Ascending aorta (tissue), 2 donors: ENCODE measurements at regions of chr6 and their contacts with region 1.

Region 1: GRCh38 chr6:170165072-170165463 is 125.8 kb downstream of the DLL1 start:
- DNase-seq: peak in 1 of 2 donors; percentile 76
- H3K4me3 ChIP-seq: peak overlapping the region in 1 of 2 donors; percentile 17
- H3K27ac ChIP-seq: no peak overlapping the region
- H3K4me1 ChIP-seq: no peaks in the 10 kb centered on the region
- H3K27me3 ChIP-seq: no peaks in the 10 kb centered on the region
- CTCF ChIP-seq: peak in 2 of 3 experiments; percentile 20 to 33

Region 2: DNA sequence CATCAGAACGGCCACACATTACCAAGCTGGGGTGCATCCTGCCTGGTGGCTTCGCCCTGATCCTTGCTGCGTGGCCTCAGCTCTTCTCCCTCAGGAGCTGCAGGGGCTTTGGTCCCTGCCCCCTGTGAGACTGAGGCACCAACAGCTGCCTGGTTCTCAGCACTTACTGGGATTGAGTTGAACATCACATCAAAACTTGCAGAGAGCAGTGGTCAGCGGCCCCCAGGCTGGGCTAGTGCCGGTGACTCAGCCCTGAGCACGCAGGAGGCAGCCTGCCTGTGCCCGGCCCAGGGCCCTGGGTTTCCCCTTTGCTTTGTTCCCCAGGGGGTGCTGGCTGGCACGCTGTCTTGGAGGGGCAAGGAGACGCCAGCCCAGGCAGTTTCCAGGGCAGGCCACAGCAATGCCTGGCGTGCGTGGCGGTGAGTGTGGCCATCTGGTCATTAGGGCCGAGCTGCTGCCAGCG is 62.5 kb after region 1 on chr6:
- intact Hi-C with region 1: no loop called
- DNase-seq: no peak
- H3K4me3 ChIP-seq: no peak overlapping the region
- H3K27ac ChIP-seq: no peak overlapping the region
- H3K4me1 ChIP-seq: no peaks in the 10 kb centered on the region
- H3K27me3 ChIP-seq: no peaks in the 10 kb centered on the region
- CTCF ChIP-seq: no peak

Region 3: GRCh38 chr6:170291271-170292110 is 126.4 kb after region 1 on chr6:
- intact Hi-C with region 1: loop called (anchors 5 kb)
- DNase-seq: peak in 1 of 2 donors; percentile 74
- H3K4me3 ChIP-seq: peak overlapping the region; percentile 85 to 87
- H3K27ac ChIP-seq: no peak overlapping the region
- H3K4me1 ChIP-seq: peaks cover 15 to 49% of the 10 kb centered on the region in 2 donors
- H3K27me3 ChIP-seq: peaks cover 37% of the 10 kb centered on the region
- CTCF ChIP-seq: no peak